ENCODE measurements at regions of chr2 and their contacts with region 1.

Region 1: DNA sequence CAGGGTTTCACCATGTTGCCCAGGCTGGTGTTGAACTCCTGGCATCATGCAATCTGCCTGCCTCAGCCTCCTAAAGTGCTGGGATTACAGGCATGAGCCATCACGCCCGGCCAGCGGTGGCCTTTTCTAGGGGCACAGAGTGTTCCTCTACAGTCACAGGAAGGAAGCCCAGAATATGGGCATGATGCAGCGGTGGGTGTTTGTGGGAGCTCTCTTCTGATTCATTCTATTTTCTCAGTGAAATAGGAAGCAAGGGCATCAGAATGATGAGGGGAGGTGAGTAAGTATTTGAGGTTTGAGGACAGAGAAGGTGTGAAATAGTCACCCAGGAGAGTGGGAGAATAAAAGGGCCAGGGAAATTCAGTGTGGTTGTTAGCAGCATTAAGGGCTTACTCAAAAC is 70.3 kb upstream of the PSME4 start:
- DNase-seq: no peak
- CTCF ChIP-seq: no peak

Region 2: DNA sequence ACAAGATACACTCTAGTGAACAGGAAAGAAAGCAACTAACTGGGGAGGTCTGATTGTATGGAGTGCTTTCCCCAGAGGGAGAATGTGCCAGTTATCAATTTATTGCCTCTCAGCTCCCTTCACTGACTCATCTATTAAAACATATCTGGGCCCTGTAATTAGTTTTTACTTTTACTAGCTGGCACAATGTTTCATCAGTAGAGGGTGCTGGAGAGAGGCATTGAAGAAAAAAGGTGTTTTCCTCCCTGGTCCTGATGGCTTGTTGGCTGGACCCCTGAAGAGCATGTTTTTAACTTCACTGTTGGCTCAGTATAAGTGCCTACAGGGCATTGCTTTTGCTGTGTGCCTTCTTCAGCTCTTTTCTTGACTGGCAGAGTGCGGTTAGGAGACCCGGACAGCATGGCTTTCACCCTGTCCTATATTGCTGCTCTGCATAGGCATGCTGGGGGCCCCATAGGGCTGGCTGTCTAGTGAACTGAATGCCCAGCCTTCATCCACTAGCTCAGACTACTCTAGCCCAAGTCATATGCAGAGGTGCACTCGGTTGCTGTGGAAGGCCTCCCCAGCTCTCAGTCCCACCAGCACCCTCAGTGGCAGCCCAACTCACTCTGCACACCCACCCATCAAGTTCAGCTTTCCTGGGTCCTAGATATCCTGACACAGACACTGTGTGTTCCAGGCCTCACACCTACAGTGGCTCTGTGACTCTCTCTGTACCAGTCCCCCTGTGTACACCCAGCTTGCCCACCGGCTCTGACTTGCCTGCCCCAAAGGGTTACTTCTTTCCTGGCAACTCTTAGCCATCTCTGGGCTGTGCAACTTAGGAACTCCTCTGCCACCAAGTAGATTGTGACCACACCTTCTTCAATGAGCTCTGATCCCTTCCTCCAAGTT is 11.9 kb after region 1 on chr2:
- CTCF ChIA-PET with region 1: interaction called, 15 read pairs
- POLR2A ChIA-PET with region 1: no interaction called
- DNase-seq: no peak
- CTCF ChIP-seq: peak; percentile 43

Region 3: DNA sequence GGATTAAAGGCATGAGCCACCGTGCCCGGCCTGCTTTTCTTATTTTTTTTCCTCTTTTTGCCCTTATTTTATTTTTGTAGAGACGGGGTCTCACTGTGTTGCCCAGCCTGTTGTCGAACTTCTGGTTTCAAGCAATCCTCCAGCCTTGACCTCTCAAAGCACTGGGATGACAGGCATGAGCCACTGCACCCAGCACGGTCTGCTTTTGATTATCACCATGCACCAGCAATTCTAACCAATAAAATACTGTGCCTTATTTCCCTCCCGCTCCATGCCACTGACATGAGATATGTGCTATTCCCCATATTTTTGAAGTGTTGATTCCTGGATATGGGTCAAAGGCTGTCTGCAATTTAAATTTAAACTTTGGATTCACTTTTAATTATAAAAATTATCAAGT is 117.2 kb after region 1 on chr2:
- CTCF ChIA-PET with region 1: no interaction called
- POLR2A ChIA-PET with region 1: no interaction called
- DNase-seq: no peak
- CTCF ChIP-seq: no peak

Measured in GM10248 (cell line).